ENCODE measurements at regions of chr5 and their contacts with region 1.

Region 1: GRCh38 chr5:71461360-71461759 is 5.9 kb downstream of the BDP1 start:
- DNase-seq: no peak
- H3K4me3 Mint-ChIP-seq: no peak overlapping the region
- H3K27ac Mint-ChIP-seq: no peak overlapping the region
- H3K4me1 Mint-ChIP-seq: peaks cover 17% of the 10 kb centered on the region
- H3K27me3 Mint-ChIP-seq: no peaks in the 10 kb centered on the region

Region 2: DNA sequence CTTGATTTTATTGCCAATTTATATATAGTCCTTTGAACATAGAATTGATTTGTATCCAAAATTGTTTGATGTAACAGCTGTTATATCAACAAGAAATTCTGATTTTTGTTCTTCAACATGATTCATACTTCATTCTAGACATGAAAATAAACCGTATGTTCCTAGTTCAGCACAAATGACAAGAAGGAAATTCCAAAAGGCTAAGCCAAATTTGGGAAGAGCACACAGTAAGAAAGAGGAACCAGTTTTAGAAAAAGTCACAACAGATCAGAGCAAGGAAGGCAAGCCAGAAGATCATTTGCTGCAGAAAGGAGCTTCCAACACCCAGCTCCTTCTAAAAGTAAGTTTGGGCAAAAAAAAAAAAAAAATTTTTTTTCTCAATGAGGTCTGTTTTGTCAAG is 60.8 kb after region 1 on chr5:
- CTCF ChIA-PET with region 1: no interaction called
- POLR2A ChIA-PET with region 1: no interaction called
- intact Hi-C with region 1: loop called (anchors 10 kb)
- DNase-seq: no peak
- H3K4me3 Mint-ChIP-seq: no peak overlapping the region
- H3K27ac Mint-ChIP-seq: peak overlapping the region; percentile 4
- H3K4me1 Mint-ChIP-seq: no peaks in the 10 kb centered on the region
- H3K27me3 Mint-ChIP-seq: no peaks in the 10 kb centered on the region

Region 3: DNA sequence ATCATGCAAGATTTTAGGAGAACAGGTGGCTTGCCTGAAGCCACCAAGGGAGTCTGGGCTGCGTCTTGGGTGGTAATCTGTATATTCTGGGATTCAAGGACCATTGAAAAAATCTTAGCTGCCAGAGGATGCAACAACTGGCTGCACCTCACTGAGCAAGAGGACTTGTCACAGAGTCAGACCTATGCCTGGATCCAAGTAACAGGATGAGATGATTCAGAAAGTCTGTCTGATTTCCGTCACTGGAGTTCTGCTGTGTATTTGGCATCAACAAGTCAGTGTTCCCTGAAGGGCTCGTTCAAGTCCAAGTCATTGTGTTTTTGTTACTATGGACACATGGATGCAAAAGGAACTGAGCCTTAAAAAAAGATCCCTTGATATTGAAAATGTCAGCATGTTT is 219.9 kb after region 1 on chr5:
- CTCF ChIA-PET with region 1: no interaction called
- POLR2A ChIA-PET with region 1: no interaction called
- intact Hi-C with region 1: no loop called
- DNase-seq: no peak
- H3K4me3 Mint-ChIP-seq: no peak overlapping the region
- H3K27ac Mint-ChIP-seq: no peak overlapping the region
- H3K4me1 Mint-ChIP-seq: no peaks in the 10 kb centered on the region
- H3K27me3 Mint-ChIP-seq: peaks cover 41% of the 10 kb centered on the region